Naive thymus-derived CD4-positive, alpha-beta T cell (primary cell): ENCODE measurements at regions of chr1 and their contacts with region 1.

Region 1: GRCh38 chr1:230066466-230067404 is at the start of gene GALNT2:
- DNase-seq: peak; percentile 86 to 91 (median 89)
- ATAC-seq: peak; percentile 96
- H3K4me3 ChIP-seq: peak within 1 kb of the TSS; percentile 59
- H3K4me3 Mint-ChIP-seq: peak within 1 kb of the TSS; percentile 88 to 97 (median 92)
- H3K27ac ChIP-seq: peak within 1 kb of the TSS; percentile 82
- H3K27ac Mint-ChIP-seq: peak within 1 kb of the TSS; percentile 88 to 97 (median 91)
- H3K4me1 ChIP-seq: no peaks in the 10 kb centered on the region
- H3K4me1 Mint-ChIP-seq: peaks cover 15 to 48% (median 38%) of the 10 kb centered on the region in 7 donors
- H3K27me3 ChIP-seq: no peaks in the 10 kb centered on the region
- H3K27me3 Mint-ChIP-seq: peaks cover 0 to 10% (median 0%) of the 10 kb centered on the region in 5 donors
- total RNA-seq, gene GALNT2: 18.7 to 32.7 (median 26.4) TPM

Region 2: DNA sequence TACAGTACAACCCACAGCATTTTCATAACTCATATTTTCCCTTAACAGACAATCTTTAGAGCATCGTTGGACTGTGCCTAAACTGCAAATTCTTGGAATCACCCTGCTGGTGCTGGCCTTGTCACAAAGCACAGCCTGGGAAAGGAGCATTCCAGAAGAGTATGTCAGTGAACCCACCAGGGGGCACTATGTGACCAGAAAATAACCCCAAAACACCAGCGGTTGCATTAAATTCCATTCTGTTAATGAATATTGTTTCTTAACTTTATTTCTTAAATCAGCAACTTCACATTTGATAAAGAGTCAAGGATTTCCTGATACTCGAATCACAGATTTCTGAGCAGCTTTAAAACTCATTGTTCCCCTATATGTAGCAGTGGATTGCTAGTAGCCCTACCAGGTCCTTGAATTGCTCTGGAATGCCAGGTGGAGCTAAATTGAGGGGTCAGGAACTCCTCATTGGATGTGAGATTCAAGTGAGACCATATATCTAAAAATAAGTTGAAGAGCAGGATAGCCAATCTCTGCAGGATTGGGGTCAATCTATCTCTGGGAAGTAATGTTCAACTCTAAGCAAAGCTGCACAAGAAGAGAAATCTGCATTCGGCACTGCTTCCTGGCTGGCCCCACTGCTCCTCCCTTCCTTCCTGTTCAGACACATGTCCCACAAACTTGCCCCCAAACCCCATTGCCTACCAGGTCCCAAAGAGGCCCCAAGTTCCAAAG is 808.5 kb before region 1 on chr1:
- CTCF ChIA-PET with region 1: no interaction called
- POLR2A ChIA-PET with region 1: no interaction called
- intact Hi-C with region 1: loop called in 1 of 2 experiments (anchors 5 kb)
- DNase-seq: peak; percentile 19 to 77 (median 65)
- ATAC-seq: peak; percentile 67
- H3K4me3 ChIP-seq: peak overlapping the region; percentile 7
- H3K4me3 Mint-ChIP-seq: peak overlapping the region in 9 of 10 donors; percentile 9 to 76 (median 61)
- H3K27ac ChIP-seq: no peak overlapping the region
- H3K27ac Mint-ChIP-seq: peak overlapping the region; percentile 14 to 88 (median 67)
- H3K4me1 ChIP-seq: peaks cover 24 to 35% of the 10 kb centered on the region in 2 donors
- H3K4me1 Mint-ChIP-seq: peaks cover 21 to 36% (median 30%) of the 10 kb centered on the region in 7 donors
- H3K27me3 ChIP-seq: no peaks in the 10 kb centered on the region
- H3K27me3 Mint-ChIP-seq: peaks cover 0 to 6% (median 0%) of the 10 kb centered on the region in 5 donors

Region 3: DNA sequence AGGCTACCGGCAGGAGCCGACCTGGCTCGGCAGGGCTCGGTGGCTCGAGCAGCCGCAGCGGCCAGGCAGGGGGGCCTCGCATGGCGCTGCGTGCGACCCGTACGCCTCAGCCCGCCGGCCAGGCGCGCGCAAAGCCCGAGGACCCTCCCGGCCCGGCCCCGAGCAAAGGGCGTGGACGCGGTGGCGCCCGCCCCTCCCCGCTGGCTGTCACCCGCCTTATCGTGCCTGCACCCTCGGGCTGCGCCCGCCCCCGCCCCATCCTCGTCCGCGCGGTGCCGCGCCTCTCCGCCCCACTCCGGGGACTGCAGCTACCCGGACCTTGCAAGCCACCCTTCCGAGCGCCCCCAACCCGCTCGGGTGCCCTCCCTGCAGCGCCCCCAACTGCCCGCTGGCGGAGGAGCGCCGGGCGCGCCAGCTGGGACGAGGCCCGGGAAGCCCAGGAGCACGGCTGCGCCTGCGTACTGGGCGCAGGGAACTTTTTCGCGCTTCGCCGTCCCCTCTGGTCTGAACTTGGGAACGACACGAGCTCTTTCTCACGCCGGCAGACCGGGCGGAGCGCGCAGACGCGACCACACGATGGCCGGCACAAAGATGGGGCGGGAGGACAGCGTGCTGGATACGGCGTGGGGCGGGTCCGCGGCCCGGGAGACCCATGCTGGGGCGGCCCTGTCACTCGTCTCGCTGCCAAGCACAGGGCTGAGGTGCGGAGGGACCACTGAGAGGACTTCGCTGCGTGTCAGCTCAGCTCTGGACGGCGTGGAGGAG is 508.0 kb before region 1 on chr1 and contains the start of gene ABCB10:
- CTCF ChIA-PET with region 1: no interaction called
- POLR2A ChIA-PET with region 1: no interaction called
- intact Hi-C with region 1: loop called (anchors 1 to 5 kb)
- DNase-seq: peak; percentile 68 to 96 (median 80)
- ATAC-seq: peak; percentile 85
- H3K4me3 ChIP-seq: peak within 1 kb of the TSS; percentile 88
- H3K4me3 Mint-ChIP-seq: peak within 1 kb of the TSS; percentile 91 to 97 (median 95)
- H3K27ac ChIP-seq: peak within 1 kb of the TSS; percentile 65
- H3K27ac Mint-ChIP-seq: peak within 1 kb of the TSS; percentile 64 to 92 (median 87)
- H3K4me1 ChIP-seq: peaks cover 15 to 16% of the 10 kb centered on the region in 2 donors
- H3K4me1 Mint-ChIP-seq: peaks cover 37 to 46% (median 41%) of the 10 kb centered on the region in 7 donors
- H3K27me3 ChIP-seq: no peaks in the 10 kb centered on the region
- H3K27me3 Mint-ChIP-seq: peaks cover 0 to 6% (median 0%) of the 10 kb centered on the region in 5 donors
- total RNA-seq, gene ABCB10: 14.1 to 31.9 (median 18.4) TPM

Region 4: GRCh38 chr1:229952670-229953520 is 113.8 kb before region 1 on chr1:
- CTCF ChIA-PET with region 1: no interaction called
- POLR2A ChIA-PET with region 1: no interaction called
- intact Hi-C with region 1: loop called in 1 of 2 experiments (anchors 5 kb)
- DNase-seq: no peak
- ATAC-seq: no peak
- H3K4me3 ChIP-seq: no peak overlapping the region
- H3K4me3 Mint-ChIP-seq: peak overlapping the region in 3 of 10 donors; percentile 63 to 68 (median 64)
- H3K27ac ChIP-seq: no peak overlapping the region
- H3K27ac Mint-ChIP-seq: peak overlapping the region in 2 of 9 donors; percentile 40 to 76
- H3K4me1 ChIP-seq: no peaks in the 10 kb centered on the region
- H3K4me1 Mint-ChIP-seq: peaks cover 0 to 25% (median 14%) of the 10 kb centered on the region in 7 donors
- H3K27me3 ChIP-seq: no peaks in the 10 kb centered on the region
- H3K27me3 Mint-ChIP-seq: peaks cover 0 to 44% (median 0%) of the 10 kb centered on the region in 5 donors

Region 5: GRCh38 chr1:230077436-230078221 is 10.9 kb after region 1 on chr1:
- CTCF ChIA-PET with region 1: no interaction called
- POLR2A ChIA-PET with region 1: no interaction called
- intact Hi-C with region 1: no loop called
- DNase-seq: no peak
- ATAC-seq: no peak
- H3K4me3 ChIP-seq: no peak overlapping the region
- H3K4me3 Mint-ChIP-seq: no peak overlapping the region
- H3K27ac ChIP-seq: no peak overlapping the region
- H3K27ac Mint-ChIP-seq: no peak overlapping the region
- H3K4me1 ChIP-seq: no peaks in the 10 kb centered on the region
- H3K4me1 Mint-ChIP-seq: peaks cover 15 to 57% (median 35%) of the 10 kb centered on the region in 7 donors
- H3K27me3 ChIP-seq: no peaks in the 10 kb centered on the region
- H3K27me3 Mint-ChIP-seq: peaks cover 0 to 2% (median 0%) of the 10 kb centered on the region in 5 donors

Region 6: GRCh38 chr1:230127105-230128054 is 60.6 kb after region 1 on chr1:
- CTCF ChIA-PET with region 1: interaction called, 3 read pairs
- POLR2A ChIA-PET with region 1: no interaction called
- intact Hi-C with region 1: loop called in 1 of 2 experiments (anchors 1 kb)
- DNase-seq: peak in 5 of 9 donors; percentile 3 to 64 (median 20)
- ATAC-seq: peak; percentile 74
- H3K4me3 ChIP-seq: no peak overlapping the region
- H3K4me3 Mint-ChIP-seq: peak overlapping the region; percentile 28 to 85 (median 60)
- H3K27ac ChIP-seq: no peak overlapping the region
- H3K27ac Mint-ChIP-seq: peak overlapping the region in 6 of 9 donors; percentile 45 to 84 (median 60)
- H3K4me1 ChIP-seq: peaks cover 9 to 17% of the 10 kb centered on the region in 2 donors
- H3K4me1 Mint-ChIP-seq: peaks cover 44 to 74% (median 64%) of the 10 kb centered on the region in 7 donors
- H3K27me3 ChIP-seq: no peaks in the 10 kb centered on the region
- H3K27me3 Mint-ChIP-seq: no peaks in the 10 kb centered on the region

Region 7: DNA sequence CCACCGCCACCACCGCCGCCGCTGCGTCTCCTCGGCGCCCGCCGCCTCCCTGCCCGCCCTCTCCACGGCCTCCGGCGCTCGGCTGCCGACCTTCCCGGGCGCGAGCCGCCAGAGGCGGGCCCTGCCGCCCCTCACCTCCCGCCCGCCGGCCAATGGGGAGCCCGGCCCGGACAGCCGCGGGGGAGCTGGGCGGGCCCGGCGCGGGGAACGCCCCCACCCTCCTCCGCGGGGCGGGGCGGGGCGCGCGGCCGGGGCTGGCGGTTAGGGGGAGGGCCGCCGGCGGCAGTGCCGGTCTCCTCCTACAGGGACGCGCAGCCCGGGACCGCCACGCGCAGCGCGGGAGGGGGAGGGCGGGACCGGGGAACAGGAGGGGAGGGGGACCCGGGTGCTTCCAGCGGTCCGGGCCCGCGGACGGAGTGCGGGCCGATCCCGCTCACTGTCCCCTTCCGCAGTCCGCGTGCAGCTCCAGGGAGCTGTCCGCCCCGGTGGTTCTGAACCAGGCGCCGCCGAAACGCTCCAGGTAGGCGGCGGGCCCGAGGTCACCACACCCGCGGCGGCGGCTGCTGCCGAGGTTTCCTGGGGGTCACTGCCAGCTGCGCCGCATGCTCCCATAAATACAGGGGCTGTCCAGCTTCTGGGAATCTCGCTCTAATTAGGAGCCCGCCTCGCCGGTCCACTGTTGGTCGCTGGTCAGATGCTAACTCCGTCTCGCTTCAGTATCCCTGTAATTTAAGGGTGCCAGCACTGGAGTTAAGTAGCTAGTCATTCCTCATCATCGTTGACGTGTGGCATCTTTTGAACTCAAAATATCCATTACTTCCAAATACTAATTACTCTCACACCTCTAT is 359.7 kb after region 1 on chr1 and contains the start of gene PGBD5:
- CTCF ChIA-PET with region 1: no interaction called
- POLR2A ChIA-PET with region 1: no interaction called
- intact Hi-C with region 1: loop called in 1 of 2 experiments (anchors 10 kb)
- DNase-seq: peak; percentile 5 to 79 (median 44)
- ATAC-seq: peak; percentile 84
- H3K4me3 ChIP-seq: no peak within 1 kb of the TSS
- H3K4me3 Mint-ChIP-seq: peak within 1 kb of the TSS; percentile 65 to 88 (median 77)
- H3K27ac ChIP-seq: no peak within 1 kb of the TSS
- H3K27ac Mint-ChIP-seq: peak within 1 kb of the TSS in 1 of 9 donors; percentile 3
- H3K4me1 ChIP-seq: peaks cover 0 to 3% of the 10 kb centered on the region in 2 donors
- H3K4me1 Mint-ChIP-seq: peaks cover 6 to 26% (median 14%) of the 10 kb centered on the region in 7 donors
- H3K27me3 ChIP-seq: peaks cover 0 to 9% of the 10 kb centered on the region in 2 donors
- H3K27me3 Mint-ChIP-seq: peaks cover 53 to 65% (median 63%) of the 10 kb centered on the region in 5 donors
- total RNA-seq, gene PGBD5: 0.36 TPM in 1 of 5 experiments, not detected in the others

Region 8: GRCh38 chr1:231240883-231241735 is 1174.4 kb after region 1 on chr1 and contains the start of gene GNPAT:
- CTCF ChIA-PET with region 1: no interaction called
- POLR2A ChIA-PET with region 1: no interaction called
- intact Hi-C with region 1: loop called in 1 of 2 experiments (anchors 5 kb)
- DNase-seq: peak; percentile 86 to 97 (median 92)
- ATAC-seq: peak; percentile 98
- H3K4me3 ChIP-seq: peak within 1 kb of the TSS; percentile 98
- H3K4me3 Mint-ChIP-seq: peak within 1 kb of the TSS; percentile 90 to 99 (median 95)
- H3K27ac ChIP-seq: peak within 1 kb of the TSS; percentile 93
- H3K27ac Mint-ChIP-seq: peak within 1 kb of the TSS; percentile 92 to 99 (median 97)
- H3K4me1 ChIP-seq: peaks cover 17 to 44% of the 10 kb centered on the region in 2 donors
- H3K4me1 Mint-ChIP-seq: peaks cover 47 to 86% (median 76%) of the 10 kb centered on the region in 7 donors
- H3K27me3 ChIP-seq: no peaks in the 10 kb centered on the region
- H3K27me3 Mint-ChIP-seq: no peaks in the 10 kb centered on the region
- total RNA-seq, gene GNPAT: 17.3 to 41.0 (median 35.5) TPM